Naive thymus-derived CD4-positive, alpha-beta T cell (primary cell): ENCODE measurements at regions of chr12 and their contacts with region 1.

Region 1: DNA sequence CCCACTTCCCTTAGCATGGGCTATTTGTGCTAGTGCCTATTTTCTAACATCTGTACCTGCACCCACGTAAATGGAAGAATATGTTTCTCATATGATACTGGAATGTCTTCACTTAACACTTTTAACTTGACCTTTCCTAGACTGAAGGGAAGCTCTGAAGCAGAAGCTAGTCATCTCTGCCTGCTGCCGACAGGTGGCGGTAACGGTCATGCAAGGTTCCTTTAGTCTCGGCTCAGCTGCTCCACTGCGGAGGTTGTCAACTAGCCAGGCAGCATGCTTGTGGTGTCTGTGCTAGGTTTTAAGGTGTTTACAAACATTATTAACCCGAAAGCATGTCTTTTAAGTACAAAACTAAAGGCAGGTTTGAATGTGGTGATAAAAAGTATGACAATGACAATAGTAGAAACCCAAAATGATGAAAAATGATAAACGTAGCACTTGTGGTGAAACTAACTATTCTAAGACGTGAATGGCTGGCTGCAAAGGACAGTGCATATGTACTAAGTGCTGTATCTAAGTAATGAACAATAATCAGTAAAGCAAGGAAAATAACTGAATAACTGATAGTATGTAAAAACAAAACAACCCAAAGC is 117.2 kb downstream of the GRIN2B start:
- DNase-seq: peak in 6 of 9 donors; percentile 12 to 40 (median 27)
- ATAC-seq: no peak
- H3K4me3 ChIP-seq: no peak overlapping the region
- H3K4me3 Mint-ChIP-seq: no peak overlapping the region
- H3K27ac ChIP-seq: no peak overlapping the region
- H3K27ac Mint-ChIP-seq: no peak overlapping the region
- H3K4me1 ChIP-seq: no peaks in the 10 kb centered on the region
- H3K4me1 Mint-ChIP-seq: no peaks in the 10 kb centered on the region
- H3K27me3 ChIP-seq: no peaks in the 10 kb centered on the region
- H3K27me3 Mint-ChIP-seq: peaks cover 0 to 45% (median 31%) of the 10 kb centered on the region in 5 donors

Region 2: GRCh38 chr12:13843841-13844240 is 20.3 kb before region 1 on chr12:
- CTCF ChIA-PET with region 1: no interaction called
- POLR2A ChIA-PET with region 1: no interaction called
- intact Hi-C with region 1: no loop called
- DNase-seq: no peak
- ATAC-seq: no peak
- H3K4me3 ChIP-seq: no peak overlapping the region
- H3K4me3 Mint-ChIP-seq: no peak overlapping the region
- H3K27ac ChIP-seq: no peak overlapping the region
- H3K27ac Mint-ChIP-seq: no peak overlapping the region
- H3K4me1 ChIP-seq: no peaks in the 10 kb centered on the region
- H3K4me1 Mint-ChIP-seq: no peaks in the 10 kb centered on the region
- H3K27me3 ChIP-seq: no peaks in the 10 kb centered on the region
- H3K27me3 Mint-ChIP-seq: peaks cover 0 to 15% (median 13%) of the 10 kb centered on the region in 5 donors

Region 3: GRCh38 chr12:13941258-13942249 is 77.4 kb after region 1 on chr12:
- CTCF ChIA-PET with region 1: no interaction called
- POLR2A ChIA-PET with region 1: no interaction called
- intact Hi-C with region 1: loop called in 1 of 2 experiments (anchors 5 kb)
- DNase-seq: no peak
- ATAC-seq: no peak
- H3K4me3 ChIP-seq: no peak overlapping the region
- H3K4me3 Mint-ChIP-seq: no peak overlapping the region
- H3K27ac ChIP-seq: no peak overlapping the region
- H3K27ac Mint-ChIP-seq: no peak overlapping the region
- H3K4me1 ChIP-seq: no peaks in the 10 kb centered on the region
- H3K4me1 Mint-ChIP-seq: no peaks in the 10 kb centered on the region
- H3K27me3 ChIP-seq: no peaks in the 10 kb centered on the region
- H3K27me3 Mint-ChIP-seq: peaks cover 19 to 36% (median 25%) of the 10 kb centered on the region in 5 donors